AG04449 (cell line): ENCODE measurements at regions of chr13 and their contacts with region 1.

Region 1: DNA sequence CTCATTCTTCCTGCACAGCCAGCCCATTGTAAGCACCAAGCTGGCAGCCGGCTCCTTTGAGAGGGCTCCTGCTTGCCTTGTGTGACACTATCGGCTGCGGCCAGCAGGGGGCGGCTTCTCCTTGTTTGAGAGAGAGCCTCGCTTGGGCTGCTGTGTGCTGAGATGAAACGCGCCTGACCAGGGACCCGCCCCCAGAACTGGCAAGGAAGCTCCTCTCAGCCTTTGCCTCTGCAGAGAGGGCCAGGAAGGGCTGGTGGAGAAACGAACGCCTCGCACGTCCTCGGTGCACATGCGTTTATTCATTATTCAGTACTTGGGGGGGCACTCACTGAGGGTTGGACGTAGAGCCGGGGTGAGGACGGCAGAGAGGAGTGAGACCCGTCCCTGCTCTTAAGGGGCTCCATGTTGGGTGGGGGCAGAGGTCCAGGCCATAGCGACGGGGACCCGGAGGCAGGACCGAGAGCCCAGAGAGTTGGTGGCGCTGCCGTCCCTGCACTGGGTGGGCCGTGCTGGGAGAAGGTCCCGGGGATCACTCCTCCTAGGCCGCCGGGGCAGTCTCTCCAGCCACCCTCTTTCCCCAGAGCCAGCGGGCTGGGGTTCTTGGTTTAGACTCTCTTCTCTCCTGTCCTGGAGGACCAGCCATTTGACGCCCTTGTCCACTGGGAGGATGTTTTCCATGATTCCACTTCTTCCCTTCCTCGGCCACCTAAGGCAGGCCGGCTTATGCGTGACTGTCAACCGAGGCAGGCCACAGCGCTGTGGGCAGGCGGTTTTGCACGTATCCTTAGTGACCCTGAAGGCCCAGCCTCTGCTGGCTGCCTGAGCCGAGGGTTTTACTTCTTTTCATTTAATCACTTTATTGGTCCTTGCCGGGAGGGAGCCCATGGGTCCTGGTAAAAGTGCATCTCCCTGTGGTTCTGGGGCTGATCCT is 174.5 kb downstream of the KATNAL1 start:
- DNase-seq: peak; percentile 52
- H3K4me3 ChIP-seq: no peak overlapping the region
- CTCF ChIP-seq: peak; percentile 90

Region 2: DNA sequence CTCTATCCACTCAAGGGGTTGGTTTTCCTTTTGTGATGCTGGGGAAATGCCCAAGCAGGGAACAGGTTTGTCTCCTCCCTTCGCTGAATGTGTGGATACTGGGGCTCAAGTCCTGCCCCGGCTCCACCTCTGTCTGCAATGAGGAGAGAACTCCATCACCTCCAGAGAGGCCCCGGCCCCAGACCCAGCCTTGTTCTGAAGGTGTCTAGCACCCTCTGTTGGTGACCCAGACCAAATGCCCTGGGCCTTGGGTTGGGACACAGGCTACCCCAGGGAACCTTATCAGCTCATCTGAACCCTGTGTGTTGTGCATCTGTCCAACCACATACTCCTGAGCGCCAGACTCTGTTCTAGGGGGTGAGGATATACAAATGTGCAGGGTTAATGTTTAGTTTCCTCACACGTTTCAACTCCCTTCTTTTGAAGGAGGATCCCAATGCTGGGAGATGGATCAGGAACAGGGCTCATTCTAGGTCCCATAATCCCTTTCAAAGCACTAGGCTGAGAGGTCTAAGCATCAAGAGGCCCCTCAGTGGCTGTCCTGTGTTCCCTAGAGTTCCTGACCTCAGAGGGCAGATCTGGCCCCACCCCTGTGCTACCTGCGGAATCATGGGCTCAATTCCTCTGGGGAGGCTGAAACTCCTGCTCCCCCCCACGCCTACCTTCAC is 424.9 kb before region 1 on chr13:
- CTCF ChIA-PET with region 1: no interaction called
- POLR2A ChIA-PET with region 1: no interaction called
- DNase-seq: no peak
- H3K4me3 ChIP-seq: no peak overlapping the region
- CTCF ChIP-seq: peak; percentile 76

Region 3: GRCh38 chr13:29771247-29771646 is 361.6 kb before region 1 on chr13:
- CTCF ChIA-PET with region 1: interaction called, 29 read pairs
- POLR2A ChIA-PET with region 1: no interaction called
- DNase-seq: no peak
- H3K4me3 ChIP-seq: no peak overlapping the region
- CTCF ChIP-seq: peak; percentile 4

Region 4: GRCh38 chr13:30158774-30159445 is 26.0 kb after region 1 on chr13:
- CTCF ChIA-PET with region 1: interaction called, 248 read pairs
- POLR2A ChIA-PET with region 1: no interaction called
- DNase-seq: peak; percentile 45
- H3K4me3 ChIP-seq: no peak overlapping the region
- CTCF ChIP-seq: peak; percentile 61

Region 5: GRCh38 chr13:30175166-30175565 is 42.3 kb after region 1 on chr13:
- CTCF ChIA-PET with region 1: interaction called, 13 read pairs
- POLR2A ChIA-PET with region 1: no interaction called
- DNase-seq: no peak
- H3K4me3 ChIP-seq: no peak overlapping the region
- CTCF ChIP-seq: no peak

Region 6: GRCh38 chr13:30453727-30454126 is 320.8 kb after region 1 on chr13:
- CTCF ChIA-PET with region 1: interaction called, 11 read pairs
- POLR2A ChIA-PET with region 1: no interaction called
- DNase-seq: no peak
- H3K4me3 ChIP-seq: no peak overlapping the region
- CTCF ChIP-seq: no peak

Region 7: DNA sequence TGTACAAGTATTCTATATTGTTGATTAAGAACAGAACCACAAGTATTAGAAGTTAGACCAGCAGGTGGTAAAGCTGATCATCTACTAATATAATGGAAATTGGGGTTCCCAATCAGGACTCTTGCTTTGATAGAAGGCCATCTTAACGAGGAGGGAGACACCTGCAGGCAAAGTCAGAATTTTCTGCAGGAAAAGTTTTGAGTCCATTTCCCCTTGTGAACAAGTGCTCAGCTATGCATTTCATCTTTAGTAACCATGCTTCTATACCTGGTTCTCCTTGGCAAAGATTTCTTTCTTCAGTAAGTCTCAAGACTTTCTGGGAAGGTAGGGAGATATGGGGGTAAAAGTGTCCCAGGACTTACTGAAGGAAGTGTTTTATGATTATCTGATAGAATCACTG is 448.7 kb after region 1 on chr13:
- CTCF ChIA-PET with region 1: interaction called, 22 read pairs
- POLR2A ChIA-PET with region 1: no interaction called
- DNase-seq: no peak
- H3K4me3 ChIP-seq: no peak overlapping the region
- CTCF ChIP-seq: no peak